Activated B cell treated with CpG ODN at 0.5 μM for 24 hours (primary cell): ENCODE measurements at regions of chr12 and their contacts with region 1.

Region 1: DNA sequence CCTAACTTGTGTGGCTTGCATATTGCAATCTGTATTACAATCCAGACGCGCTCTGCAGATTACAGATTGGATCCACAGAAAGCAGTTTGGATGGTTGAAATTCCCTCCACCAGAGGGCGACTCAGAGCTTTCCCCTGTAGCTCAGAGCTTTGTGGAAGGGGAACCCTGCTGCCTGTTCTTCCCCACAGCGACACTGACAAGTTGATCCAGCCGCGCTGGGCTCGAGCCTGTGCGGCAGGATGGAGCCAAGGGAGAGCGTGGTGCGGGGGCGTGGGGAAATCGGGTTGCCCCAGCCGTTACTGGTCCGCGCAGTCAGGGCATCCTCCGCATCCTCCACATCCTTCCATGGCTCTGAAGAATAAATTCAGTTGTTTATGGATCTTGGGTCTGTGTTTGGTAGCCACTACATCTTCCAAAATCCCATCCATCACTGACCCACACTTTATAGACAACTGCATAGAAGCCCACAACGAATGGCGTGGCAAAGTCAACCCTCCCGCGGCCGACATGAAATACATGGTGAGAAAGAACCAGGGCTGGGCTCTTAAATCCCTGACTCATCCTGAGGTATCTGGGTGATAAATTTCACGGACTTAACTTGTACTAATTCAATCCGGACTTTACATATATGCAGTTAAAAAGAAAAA is at the start of gene GLIPR1L1:
- DNase-seq: peak; percentile 46
- ATAC-seq: peak; percentile 75
- H3K4me3 Mint-ChIP-seq: peak within 1 kb of the TSS; percentile 60
- H3K27ac Mint-ChIP-seq: no peak within 1 kb of the TSS
- H3K4me1 Mint-ChIP-seq: peaks cover 16% of the 10 kb centered on the region
- H3K27me3 Mint-ChIP-seq: peaks cover 23% of the 10 kb centered on the region
- CTCF ChIP-seq: peak; percentile 87
- total RNA-seq, gene GLIPR1L1: not detected in 2 replicates

Region 2: GRCh38 chr12:75378354-75378753 is 43.8 kb after region 1 on chr12:
- CTCF ChIA-PET with region 1: no interaction called
- POLR2A ChIA-PET with region 1: no interaction called
- intact Hi-C with region 1: no loop called
- DNase-seq: no peak
- ATAC-seq: no peak
- H3K4me3 Mint-ChIP-seq: no peak overlapping the region
- H3K27ac Mint-ChIP-seq: no peak overlapping the region
- H3K4me1 Mint-ChIP-seq: no peaks in the 10 kb centered on the region
- H3K27me3 Mint-ChIP-seq: no peaks in the 10 kb centered on the region
- CTCF ChIP-seq: no peak

Region 3: GRCh38 chr12:75437564-75437963 is 103.1 kb after region 1 on chr12:
- CTCF ChIA-PET with region 1: no interaction called
- POLR2A ChIA-PET with region 1: no interaction called
- intact Hi-C with region 1: loop called (anchors 1 kb)
- DNase-seq: no peak
- ATAC-seq: peak; percentile 72
- H3K4me3 Mint-ChIP-seq: no peak overlapping the region
- H3K27ac Mint-ChIP-seq: no peak overlapping the region
- H3K4me1 Mint-ChIP-seq: peaks cover 3% of the 10 kb centered on the region
- H3K27me3 Mint-ChIP-seq: peaks cover 10% of the 10 kb centered on the region
- CTCF ChIP-seq: no peak

Region 4: GRCh38 chr12:75505706-75506312 is 171.3 kb after region 1 on chr12:
- CTCF ChIA-PET with region 1: interaction called, 20 read pairs
- POLR2A ChIA-PET with region 1: no interaction called
- intact Hi-C with region 1: loop called (anchors 1 kb)
- DNase-seq: no peak
- ATAC-seq: peak; percentile 45
- H3K4me3 Mint-ChIP-seq: no peak overlapping the region
- H3K27ac Mint-ChIP-seq: no peak overlapping the region
- H3K4me1 Mint-ChIP-seq: peaks cover 17% of the 10 kb centered on the region
- H3K27me3 Mint-ChIP-seq: no peaks in the 10 kb centered on the region
- CTCF ChIP-seq: no peak

Region 5: DNA sequence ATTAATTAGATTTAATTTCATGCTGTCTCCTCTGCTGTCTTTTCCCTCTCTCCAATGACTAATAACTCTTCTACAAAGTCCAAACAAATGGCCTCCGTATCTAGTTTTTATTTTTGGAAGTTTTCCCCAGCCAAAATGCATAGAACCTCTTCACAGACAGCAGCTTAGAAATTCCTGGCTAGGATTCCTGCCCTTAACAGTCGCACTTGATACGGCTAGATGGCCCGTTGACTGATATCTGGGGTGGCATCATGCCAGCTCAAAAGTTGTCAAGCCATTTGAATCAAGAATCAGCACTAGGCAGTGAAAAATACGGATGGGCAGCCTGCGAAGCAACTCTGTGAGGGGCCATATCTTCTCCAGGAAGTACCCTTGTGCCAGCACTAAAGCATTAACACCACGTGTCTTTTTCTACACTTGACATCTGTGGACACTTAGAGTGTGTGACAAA is 215.9 kb after region 1 on chr12:
- CTCF ChIA-PET with region 1: no interaction called
- POLR2A ChIA-PET with region 1: no interaction called
- intact Hi-C with region 1: no loop called
- DNase-seq: no peak
- ATAC-seq: no peak
- H3K4me3 Mint-ChIP-seq: no peak overlapping the region
- H3K27ac Mint-ChIP-seq: no peak overlapping the region
- H3K4me1 Mint-ChIP-seq: no peaks in the 10 kb centered on the region
- H3K27me3 Mint-ChIP-seq: peaks cover 19% of the 10 kb centered on the region
- CTCF ChIP-seq: no peak

Region 6: GRCh38 chr12:75591628-75592027 is 257.1 kb after region 1 on chr12:
- CTCF ChIA-PET with region 1: no interaction called
- POLR2A ChIA-PET with region 1: no interaction called
- intact Hi-C with region 1: no loop called
- DNase-seq: no peak
- ATAC-seq: no peak
- H3K4me3 Mint-ChIP-seq: no peak overlapping the region
- H3K27ac Mint-ChIP-seq: no peak overlapping the region
- H3K4me1 Mint-ChIP-seq: no peaks in the 10 kb centered on the region
- H3K27me3 Mint-ChIP-seq: peaks cover 10% of the 10 kb centered on the region
- CTCF ChIP-seq: no peak

Region 7: DNA sequence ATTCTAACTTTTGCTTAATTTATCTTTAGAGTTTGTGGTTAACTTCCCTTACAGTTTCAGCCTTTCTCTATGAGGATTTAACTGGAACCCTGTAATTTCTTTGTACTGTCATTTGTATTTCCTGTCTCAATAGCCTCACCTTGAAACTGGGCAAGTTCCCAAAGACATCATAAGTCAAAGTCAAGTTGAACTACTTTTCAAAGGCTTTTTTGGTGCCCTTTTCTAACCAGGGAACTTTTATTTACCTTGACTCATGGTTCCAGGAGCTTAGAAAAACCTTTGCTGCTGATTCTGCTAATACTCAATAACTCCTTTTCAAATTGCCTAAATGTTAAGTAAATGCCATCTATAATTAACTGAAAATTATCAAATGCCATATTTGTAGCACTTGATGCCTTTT is 377.7 kb after region 1 on chr12:
- CTCF ChIA-PET with region 1: no interaction called
- POLR2A ChIA-PET with region 1: no interaction called
- intact Hi-C with region 1: no loop called
- DNase-seq: no peak
- ATAC-seq: no peak
- H3K4me3 Mint-ChIP-seq: no peak overlapping the region
- H3K27ac Mint-ChIP-seq: no peak overlapping the region
- H3K4me1 Mint-ChIP-seq: no peaks in the 10 kb centered on the region
- H3K27me3 Mint-ChIP-seq: no peaks in the 10 kb centered on the region
- CTCF ChIP-seq: no peak

Region 8: DNA sequence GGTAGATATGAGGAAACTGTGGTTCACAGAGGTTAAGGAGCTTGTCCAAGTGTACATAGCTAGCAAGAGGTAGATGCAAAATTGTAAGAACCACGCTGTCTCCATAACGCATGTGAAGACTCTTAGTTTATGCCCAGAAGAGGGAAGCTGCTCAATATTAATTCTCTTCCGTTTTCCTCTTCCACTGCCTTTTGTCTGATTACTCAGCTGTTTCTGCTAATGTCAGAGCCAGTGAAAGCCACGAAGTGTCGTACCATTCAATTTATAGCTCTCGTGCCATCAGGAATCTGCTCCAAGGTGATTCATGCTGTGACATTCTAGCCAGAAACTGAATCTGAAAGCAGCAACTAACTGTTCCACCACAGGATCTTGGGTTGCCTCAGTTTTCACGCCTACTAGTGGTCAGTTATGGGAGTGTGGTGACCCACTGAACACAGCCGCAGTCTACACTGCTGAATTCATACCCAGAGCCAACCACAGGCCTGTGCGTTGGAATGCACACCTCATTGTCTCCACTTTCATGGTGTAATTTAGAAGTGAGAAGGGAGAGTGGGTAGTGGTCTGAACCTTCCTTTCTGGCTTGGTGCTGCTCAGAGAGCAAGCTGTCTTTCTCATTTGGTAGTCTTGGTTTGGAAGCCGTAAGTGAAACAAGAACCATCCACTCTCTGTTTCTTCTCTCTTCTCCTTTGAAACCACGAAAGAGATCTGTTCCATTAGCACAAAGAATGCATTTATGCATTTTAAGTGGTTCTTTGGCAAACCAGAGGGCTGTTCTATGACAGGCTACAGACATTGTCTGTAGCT is 824.2 kb after region 1 on chr12:
- CTCF ChIA-PET with region 1: no interaction called
- POLR2A ChIA-PET with region 1: no interaction called
- intact Hi-C with region 1: loop called (anchors 10 kb)
- DNase-seq: peak; percentile 33
- ATAC-seq: peak; percentile 99
- H3K4me3 Mint-ChIP-seq: peak overlapping the region; percentile 82
- H3K27ac Mint-ChIP-seq: peak overlapping the region; percentile 88
- H3K4me1 Mint-ChIP-seq: peaks cover 20% of the 10 kb centered on the region
- H3K27me3 Mint-ChIP-seq: no peaks in the 10 kb centered on the region
- CTCF ChIP-seq: no peak

Region 9: GRCh38 chr12:76455582-76456345 is 1121.3 kb after region 1 on chr12:
- CTCF ChIA-PET with region 1: no interaction called
- POLR2A ChIA-PET with region 1: no interaction called
- intact Hi-C with region 1: loop called (anchors 2 kb)
- DNase-seq: no peak
- ATAC-seq: peak; percentile 62
- H3K4me3 Mint-ChIP-seq: no peak overlapping the region
- H3K27ac Mint-ChIP-seq: no peak overlapping the region
- H3K4me1 Mint-ChIP-seq: peaks cover 9% of the 10 kb centered on the region
- H3K27me3 Mint-ChIP-seq: no peaks in the 10 kb centered on the region
- CTCF ChIP-seq: no peak